ENCODE measurements at regions of chr10 and their contacts with region 1.

Region 1: DNA sequence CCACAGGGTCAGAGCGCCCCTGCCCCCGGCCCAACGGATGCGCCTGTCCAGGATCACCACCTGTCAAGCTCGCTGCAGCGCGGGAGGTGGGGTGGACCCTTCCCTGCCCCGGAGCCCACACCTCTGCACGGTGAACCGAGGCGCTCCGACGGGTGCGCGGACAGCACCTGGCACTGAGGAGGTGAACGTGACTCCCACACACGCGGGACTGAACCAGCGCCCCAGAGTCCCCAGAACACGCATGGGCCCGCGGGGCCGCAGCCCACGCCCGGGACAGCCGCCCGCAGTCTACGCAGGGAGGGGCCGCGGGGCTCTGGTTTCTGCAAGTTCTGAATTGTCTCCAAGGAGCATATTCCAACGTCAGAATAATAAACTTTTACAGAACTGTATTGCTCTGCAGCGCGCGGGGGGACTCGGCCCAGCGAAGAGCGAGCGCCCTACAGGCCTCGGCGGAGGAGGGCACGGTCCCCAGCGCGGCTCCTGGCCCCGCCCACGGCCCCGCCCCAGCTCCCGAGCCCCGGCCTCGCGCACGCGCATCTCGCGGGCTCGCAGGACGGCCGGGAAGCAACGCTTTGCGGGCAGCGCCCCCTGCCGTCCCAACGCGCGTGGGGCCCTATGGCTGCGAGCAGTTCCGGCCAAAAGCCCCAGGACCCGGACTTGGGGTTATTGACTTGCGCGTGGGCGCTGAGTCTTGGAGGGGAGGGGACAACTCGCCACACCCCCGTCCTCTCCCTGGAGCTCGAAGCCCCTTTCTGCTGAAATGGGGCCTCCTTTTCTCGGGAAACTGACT is 29.7 kb downstream of the OAT start:
- DNase-seq: peak; percentile 86 to 97 (median 93)
- ATAC-seq: peak; percentile 99
- H3K4me3 ChIP-seq: peak overlapping the region; percentile 47 to 60
- H3K4me3 Mint-ChIP-seq: peak overlapping the region; percentile 66
- H3K27ac ChIP-seq: no peak overlapping the region
- H3K27ac Mint-ChIP-seq: no peak overlapping the region
- H3K4me1 ChIP-seq: peaks cover 10% of the 10 kb centered on the region
- H3K4me1 Mint-ChIP-seq: peaks cover 2% of the 10 kb centered on the region
- H3K27me3 ChIP-seq: no peaks in the 10 kb centered on the region
- H3K27me3 Mint-ChIP-seq: peaks cover 5% of the 10 kb centered on the region
- CTCF ChIP-seq: peak; percentile 90

Region 2: DNA sequence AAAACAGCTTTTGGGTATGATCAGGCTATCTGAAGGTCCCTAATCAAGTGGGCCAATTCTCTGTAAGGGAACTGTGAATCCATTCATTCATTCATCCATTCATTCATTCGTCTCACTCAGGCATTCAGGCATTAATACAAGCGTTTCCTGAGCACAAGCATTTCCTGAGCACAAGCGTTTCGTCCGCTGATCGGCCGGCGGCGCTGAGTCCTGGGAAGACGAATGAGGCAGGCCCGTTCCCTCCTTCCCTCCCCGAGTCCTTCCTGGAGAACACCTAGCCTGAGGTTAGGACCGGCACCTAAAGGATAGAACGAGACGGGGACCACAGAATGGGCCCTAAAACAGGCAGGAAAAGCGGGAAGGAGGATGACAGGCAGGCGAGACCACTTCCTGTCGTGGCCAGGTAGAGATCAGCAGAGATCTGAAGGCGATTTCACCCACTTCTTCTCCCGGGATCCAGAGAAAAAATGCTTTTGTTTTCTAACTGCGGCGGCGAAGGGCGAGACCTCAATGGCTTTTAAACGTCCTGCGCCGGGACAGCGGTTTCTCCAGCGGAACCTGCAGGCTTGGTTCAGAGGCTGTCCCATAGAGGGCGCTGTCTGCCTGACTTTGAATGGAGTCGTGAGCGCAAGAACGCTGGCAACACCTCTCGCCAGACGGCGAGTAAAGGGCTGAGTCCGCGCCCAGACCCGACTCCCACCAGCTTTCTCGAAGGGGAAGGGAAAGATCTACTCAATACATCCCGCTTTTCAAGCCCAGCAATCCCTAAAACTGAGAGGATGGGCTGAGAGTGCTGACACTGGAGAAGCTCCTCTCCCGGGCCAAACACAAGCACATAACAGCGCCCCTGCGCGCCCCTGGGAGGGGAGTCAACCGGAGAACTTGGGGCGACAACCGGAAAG is 1256.2 kb before region 1 on chr10:
- CTCF ChIA-PET with region 1: no interaction called
- POLR2A ChIA-PET with region 1: no interaction called
- intact Hi-C with region 1: loop called in 1 of 2 experiments (anchors 10 kb)
- DNase-seq: peak; percentile 73 to 91 (median 87)
- ATAC-seq: peak; percentile 62
- H3K4me3 ChIP-seq: peak overlapping the region in 1 of 2 experiments; percentile 16
- H3K4me3 Mint-ChIP-seq: peak overlapping the region; percentile 69
- H3K27ac ChIP-seq: no peak overlapping the region
- H3K27ac Mint-ChIP-seq: no peak overlapping the region
- H3K4me1 ChIP-seq: peaks cover 44% of the 10 kb centered on the region
- H3K4me1 Mint-ChIP-seq: peaks cover 33% of the 10 kb centered on the region
- H3K27me3 ChIP-seq: peaks cover 40 to 44% of the 10 kb centered on the region in 2 experiments
- H3K27me3 Mint-ChIP-seq: peaks cover 62% of the 10 kb centered on the region
- CTCF ChIP-seq: peak; percentile 95

Region 3: GRCh38 chr10:123582084-123582989 is 806.7 kb before region 1 on chr10:
- CTCF ChIA-PET with region 1: interaction called, 5 read pairs
- POLR2A ChIA-PET with region 1: no interaction called
- intact Hi-C with region 1: loop called in 1 of 2 experiments (anchors 1 kb)
- DNase-seq: peak; percentile 28 to 71 (median 57)
- ATAC-seq: peak; percentile 46
- H3K4me3 ChIP-seq: no peak overlapping the region
- H3K4me3 Mint-ChIP-seq: no peak overlapping the region
- H3K27ac ChIP-seq: no peak overlapping the region
- H3K27ac Mint-ChIP-seq: no peak overlapping the region
- H3K4me1 ChIP-seq: no peaks in the 10 kb centered on the region
- H3K4me1 Mint-ChIP-seq: peaks cover 1% of the 10 kb centered on the region
- H3K27me3 ChIP-seq: no peaks in the 10 kb centered on the region
- H3K27me3 Mint-ChIP-seq: peaks cover 31% of the 10 kb centered on the region
- CTCF ChIP-seq: peak; percentile 59

Region 4: DNA sequence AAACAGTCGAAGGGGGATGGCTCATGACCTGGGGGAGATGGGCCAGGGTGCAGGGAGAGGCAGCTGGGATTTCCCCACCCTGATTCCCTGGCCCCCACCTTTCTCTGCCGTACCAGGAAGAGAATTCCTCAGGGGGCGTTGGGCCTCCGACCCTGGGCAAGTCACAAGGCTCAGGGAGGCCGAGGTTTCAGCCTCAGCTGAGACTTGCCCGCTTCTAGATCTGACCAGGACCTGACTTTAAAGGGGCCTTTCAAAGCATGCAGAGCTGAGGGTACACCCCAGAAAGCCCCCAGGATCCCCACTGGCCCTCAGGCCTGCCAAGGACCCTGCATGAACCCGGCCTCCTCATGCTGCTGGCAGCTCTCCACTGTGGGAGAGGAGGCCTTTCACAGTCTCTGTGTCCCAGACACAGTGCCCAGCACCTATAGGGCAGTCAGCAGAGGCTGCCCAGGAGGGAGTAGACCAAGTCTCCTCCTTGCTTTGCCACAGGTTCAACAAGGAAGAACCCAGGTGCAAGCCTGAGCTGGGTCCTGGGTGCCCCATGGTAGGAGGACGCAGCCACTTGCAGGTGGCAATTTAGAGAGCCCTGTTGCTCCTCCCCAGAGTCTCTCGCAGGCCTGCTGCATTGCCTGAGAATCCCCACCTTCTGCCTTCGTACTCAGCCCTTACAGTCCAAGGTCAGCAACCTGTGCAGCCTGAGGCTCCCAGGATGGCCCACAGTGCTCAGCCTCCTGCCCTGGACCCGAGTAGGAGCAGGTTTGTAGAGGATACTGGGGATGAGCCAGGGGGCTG is 385.0 kb before region 1 on chr10:
- CTCF ChIA-PET with region 1: interaction called, 198 read pairs
- POLR2A ChIA-PET with region 1: no interaction called
- intact Hi-C with region 1: no loop called
- DNase-seq: peak in 1 of 9 experiments; percentile 44
- ATAC-seq: no peak
- H3K4me3 ChIP-seq: no peak overlapping the region
- H3K4me3 Mint-ChIP-seq: no peak overlapping the region
- H3K27ac ChIP-seq: no peak overlapping the region
- H3K27ac Mint-ChIP-seq: no peak overlapping the region
- H3K4me1 ChIP-seq: no peaks in the 10 kb centered on the region
- H3K4me1 Mint-ChIP-seq: no peaks in the 10 kb centered on the region
- H3K27me3 ChIP-seq: no peaks in the 10 kb centered on the region
- H3K27me3 Mint-ChIP-seq: peaks cover 4% of the 10 kb centered on the region
- CTCF ChIP-seq: no peak

Region 5: GRCh38 chr10:124172181-124172916 is 216.7 kb before region 1 on chr10:
- CTCF ChIA-PET with region 1: no interaction called
- POLR2A ChIA-PET with region 1: no interaction called
- intact Hi-C with region 1: no loop called
- DNase-seq: peak in 1 of 9 experiments; percentile 34
- ATAC-seq: no peak
- H3K4me3 ChIP-seq: no peak overlapping the region
- H3K4me3 Mint-ChIP-seq: no peak overlapping the region
- H3K27ac ChIP-seq: no peak overlapping the region
- H3K27ac Mint-ChIP-seq: no peak overlapping the region
- H3K4me1 ChIP-seq: no peaks in the 10 kb centered on the region
- H3K4me1 Mint-ChIP-seq: peaks cover 6% of the 10 kb centered on the region
- H3K27me3 ChIP-seq: no peaks in the 10 kb centered on the region
- H3K27me3 Mint-ChIP-seq: no peaks in the 10 kb centered on the region
- CTCF ChIP-seq: no peak

Region 6: DNA sequence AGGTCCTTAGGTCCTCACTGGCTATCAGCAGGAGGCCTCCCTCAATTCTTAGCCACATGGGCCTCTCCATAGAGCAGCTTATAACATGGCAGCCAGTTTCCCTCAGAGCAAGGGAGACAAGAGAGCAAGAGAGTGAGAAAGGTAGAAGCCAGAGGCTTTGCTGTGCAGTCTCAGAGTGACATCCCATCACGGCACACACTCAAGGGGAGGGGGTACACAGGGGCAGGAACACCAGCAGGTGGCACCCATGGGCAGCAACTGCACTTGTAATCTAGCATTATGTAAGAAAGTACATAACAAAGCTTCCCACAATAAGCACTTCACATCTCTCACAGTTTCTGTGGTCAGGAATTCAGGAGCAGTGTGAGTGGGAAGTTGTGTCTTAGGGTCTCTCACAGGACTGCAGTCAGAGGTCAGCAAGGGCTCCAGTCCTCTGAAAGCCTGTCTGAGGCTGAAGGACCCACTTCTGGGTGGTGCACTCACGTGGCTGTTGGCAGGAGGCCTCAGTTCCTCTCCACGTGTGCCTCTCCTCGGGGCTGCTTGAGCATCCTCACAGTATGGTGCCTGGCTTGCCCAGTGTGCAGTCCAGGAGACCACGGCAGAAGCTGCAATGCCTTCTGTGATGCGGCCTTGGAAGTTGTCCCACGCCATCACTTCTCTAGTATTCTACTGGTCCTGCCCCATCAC is 129.7 kb before region 1 on chr10:
- CTCF ChIA-PET with region 1: interaction called, 4 read pairs
- POLR2A ChIA-PET with region 1: no interaction called
- intact Hi-C with region 1: loop called in 1 of 2 experiments (anchors 1 kb)
- DNase-seq: peak in 3 of 9 experiments; percentile 15 to 36 (median 23)
- ATAC-seq: no peak
- H3K4me3 ChIP-seq: no peak overlapping the region
- H3K4me3 Mint-ChIP-seq: no peak overlapping the region
- H3K27ac ChIP-seq: no peak overlapping the region
- H3K27ac Mint-ChIP-seq: no peak overlapping the region
- H3K4me1 ChIP-seq: no peaks in the 10 kb centered on the region
- H3K4me1 Mint-ChIP-seq: no peaks in the 10 kb centered on the region
- H3K27me3 ChIP-seq: peaks cover 0 to 2% of the 10 kb centered on the region in 2 experiments
- H3K27me3 Mint-ChIP-seq: no peaks in the 10 kb centered on the region
- CTCF ChIP-seq: no peak

Region 7: DNA sequence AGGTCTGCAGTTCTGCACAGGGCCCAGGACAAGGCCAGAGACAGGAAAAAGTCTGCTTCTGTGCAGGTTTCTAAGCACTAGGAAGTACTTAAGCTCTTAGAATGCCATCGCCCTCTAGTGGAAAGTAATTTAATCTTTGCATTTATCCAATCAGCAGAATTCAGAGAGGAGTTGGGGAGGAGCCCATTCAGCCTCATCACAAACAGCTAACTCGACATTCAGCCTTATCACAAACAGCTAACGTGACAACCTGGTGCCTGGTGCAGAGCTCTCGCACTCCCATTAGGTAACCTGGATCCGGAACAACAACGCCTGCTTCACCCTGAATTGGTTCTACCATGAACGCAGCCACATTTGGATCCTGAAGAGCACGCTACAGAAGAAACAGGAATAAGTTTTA is 14.5 kb after region 1 on chr10:
- CTCF ChIA-PET with region 1: interaction called, 23 read pairs
- POLR2A ChIA-PET with region 1: no interaction called
- intact Hi-C with region 1: loop called in 1 of 2 experiments (anchors 1 kb)
- DNase-seq: peak in 4 of 9 experiments; percentile 17 to 82 (median 55)
- ATAC-seq: peak; percentile 99
- H3K4me3 ChIP-seq: no peak overlapping the region
- H3K4me3 Mint-ChIP-seq: no peak overlapping the region
- H3K27ac ChIP-seq: peak overlapping the region in 1 of 2 experiments; percentile 38
- H3K27ac Mint-ChIP-seq: peak overlapping the region; percentile 46
- H3K4me1 ChIP-seq: no peaks in the 10 kb centered on the region
- H3K4me1 Mint-ChIP-seq: peaks cover 10% of the 10 kb centered on the region
- H3K27me3 ChIP-seq: no peaks in the 10 kb centered on the region
- H3K27me3 Mint-ChIP-seq: no peaks in the 10 kb centered on the region
- CTCF ChIP-seq: peak; percentile 56

Region 8: GRCh38 chr10:124461438-124462347 is 72.7 kb after region 1 on chr10 and contains the start of gene LHPP:
- CTCF ChIA-PET with region 1: no interaction called
- POLR2A ChIA-PET with region 1: no interaction called
- intact Hi-C with region 1: loop called in 1 of 2 experiments (anchors 1 kb)
- DNase-seq: peak; percentile 72 to 93 (median 86)
- ATAC-seq: peak; percentile 94
- H3K4me3 ChIP-seq: peak within 1 kb of the TSS; percentile 61 to 90
- H3K4me3 Mint-ChIP-seq: peak within 1 kb of the TSS; percentile 91
- H3K27ac ChIP-seq: peak within 1 kb of the TSS; percentile 37 to 79
- H3K27ac Mint-ChIP-seq: peak within 1 kb of the TSS; percentile 95
- H3K4me1 ChIP-seq: peaks cover 25% of the 10 kb centered on the region
- H3K4me1 Mint-ChIP-seq: peaks cover 32% of the 10 kb centered on the region
- H3K27me3 ChIP-seq: peaks cover 0 to under 1% of the 10 kb centered on the region in 2 experiments
- H3K27me3 Mint-ChIP-seq: peaks cover 4% of the 10 kb centered on the region
- CTCF ChIP-seq: peak; percentile 39
- total RNA-seq, gene LHPP: 14.4 to 17.3 TPM

Region 9: DNA sequence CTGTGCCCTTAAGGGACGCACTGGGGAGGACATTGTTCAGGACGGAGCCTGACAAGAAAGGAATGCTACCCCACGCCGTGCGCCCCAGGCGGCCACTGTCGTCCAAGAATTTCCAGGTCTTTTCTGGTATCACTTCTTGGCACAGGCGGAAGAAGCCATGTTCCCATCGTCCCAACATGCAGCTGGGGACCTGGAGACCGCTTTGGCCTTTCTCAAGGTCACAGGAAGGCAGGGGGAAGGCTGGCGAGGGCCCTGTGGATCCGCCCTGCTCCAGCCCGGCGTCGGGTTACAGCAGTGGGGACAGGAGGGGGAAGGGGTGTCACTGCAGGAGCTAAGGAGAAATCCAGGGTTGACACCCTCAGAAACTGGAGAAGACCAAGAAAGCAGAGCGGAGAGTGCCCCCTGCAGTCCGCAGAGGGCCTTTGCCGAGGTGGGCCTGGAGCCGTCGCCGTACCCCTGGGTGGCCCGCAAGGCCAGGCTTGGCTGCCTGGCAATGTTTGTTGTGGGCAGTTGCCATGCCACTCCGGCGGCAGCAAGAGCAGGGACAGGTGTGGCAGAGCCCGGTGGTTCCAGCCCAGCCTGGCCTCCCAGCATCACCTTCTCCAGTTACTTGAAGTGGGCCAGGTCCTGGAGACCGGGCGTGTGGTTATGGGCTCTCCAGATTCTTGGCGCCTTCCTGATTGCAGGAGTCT is 176.7 kb after region 1 on chr10:
- CTCF ChIA-PET with region 1: no interaction called
- POLR2A ChIA-PET with region 1: no interaction called
- intact Hi-C with region 1: no loop called
- DNase-seq: no peak
- ATAC-seq: no peak
- H3K4me3 ChIP-seq: no peak overlapping the region
- H3K4me3 Mint-ChIP-seq: no peak overlapping the region
- H3K27ac ChIP-seq: no peak overlapping the region
- H3K27ac Mint-ChIP-seq: no peak overlapping the region
- H3K4me1 ChIP-seq: no peaks in the 10 kb centered on the region
- H3K4me1 Mint-ChIP-seq: no peaks in the 10 kb centered on the region
- H3K27me3 ChIP-seq: no peaks in the 10 kb centered on the region
- H3K27me3 Mint-ChIP-seq: no peaks in the 10 kb centered on the region
- CTCF ChIP-seq: no peak

Region 10: DNA sequence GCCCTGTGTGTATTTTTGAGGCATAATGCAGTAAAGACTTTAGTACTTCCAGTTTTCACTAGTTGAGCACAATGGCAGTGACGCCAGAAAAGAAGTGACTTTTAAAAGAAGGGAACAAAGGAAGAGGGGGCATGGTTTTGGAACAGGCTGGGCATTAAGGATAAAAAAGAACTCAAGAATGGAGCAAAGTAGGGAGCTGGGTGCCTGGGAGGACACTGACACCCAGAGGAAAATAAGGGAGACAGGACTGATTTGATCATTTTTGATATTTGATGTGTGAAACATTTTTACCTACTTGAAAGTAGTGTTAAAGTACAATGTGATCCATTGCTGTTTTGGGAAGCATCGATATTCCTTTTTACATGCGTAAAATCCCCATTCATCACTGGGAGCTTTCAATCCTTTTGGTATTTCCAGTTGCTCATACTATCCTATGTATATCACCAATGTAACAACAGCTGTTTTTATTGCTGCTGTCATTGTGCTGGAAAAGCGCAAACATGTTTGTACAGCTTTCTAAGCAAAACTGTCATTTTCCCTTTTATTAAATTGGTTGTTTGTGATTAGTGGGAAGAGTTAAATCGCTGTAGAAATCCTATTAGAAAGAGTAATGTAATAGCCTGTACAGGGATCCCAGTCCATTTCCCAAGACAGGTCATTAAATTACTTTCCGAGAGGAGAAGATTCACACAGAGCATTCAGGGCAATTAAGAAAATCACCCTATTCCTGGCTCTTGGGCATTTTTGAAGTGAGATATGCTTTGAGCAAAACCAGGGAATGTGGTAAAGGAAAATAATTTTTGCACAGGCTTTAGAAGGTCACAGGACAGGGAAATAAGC is 1914.0 kb after region 1 on chr10:
- CTCF ChIA-PET with region 1: no interaction called
- POLR2A ChIA-PET with region 1: no interaction called
- intact Hi-C with region 1: no loop called
- DNase-seq: no peak
- ATAC-seq: no peak
- H3K4me3 ChIP-seq: no peak overlapping the region
- H3K4me3 Mint-ChIP-seq: no peak overlapping the region
- H3K27ac ChIP-seq: no peak overlapping the region
- H3K27ac Mint-ChIP-seq: no peak overlapping the region
- H3K4me1 ChIP-seq: no peaks in the 10 kb centered on the region
- H3K4me1 Mint-ChIP-seq: no peaks in the 10 kb centered on the region
- H3K27me3 ChIP-seq: no peaks in the 10 kb centered on the region
- H3K27me3 Mint-ChIP-seq: no peaks in the 10 kb centered on the region
- CTCF ChIP-seq: no peak

Measured in CD8-positive, alpha-beta T cell (primary cell).